HepG2 (cell line): ENCODE measurements at regions of chr2 and their contacts with region 1.

Region 1: DNA sequence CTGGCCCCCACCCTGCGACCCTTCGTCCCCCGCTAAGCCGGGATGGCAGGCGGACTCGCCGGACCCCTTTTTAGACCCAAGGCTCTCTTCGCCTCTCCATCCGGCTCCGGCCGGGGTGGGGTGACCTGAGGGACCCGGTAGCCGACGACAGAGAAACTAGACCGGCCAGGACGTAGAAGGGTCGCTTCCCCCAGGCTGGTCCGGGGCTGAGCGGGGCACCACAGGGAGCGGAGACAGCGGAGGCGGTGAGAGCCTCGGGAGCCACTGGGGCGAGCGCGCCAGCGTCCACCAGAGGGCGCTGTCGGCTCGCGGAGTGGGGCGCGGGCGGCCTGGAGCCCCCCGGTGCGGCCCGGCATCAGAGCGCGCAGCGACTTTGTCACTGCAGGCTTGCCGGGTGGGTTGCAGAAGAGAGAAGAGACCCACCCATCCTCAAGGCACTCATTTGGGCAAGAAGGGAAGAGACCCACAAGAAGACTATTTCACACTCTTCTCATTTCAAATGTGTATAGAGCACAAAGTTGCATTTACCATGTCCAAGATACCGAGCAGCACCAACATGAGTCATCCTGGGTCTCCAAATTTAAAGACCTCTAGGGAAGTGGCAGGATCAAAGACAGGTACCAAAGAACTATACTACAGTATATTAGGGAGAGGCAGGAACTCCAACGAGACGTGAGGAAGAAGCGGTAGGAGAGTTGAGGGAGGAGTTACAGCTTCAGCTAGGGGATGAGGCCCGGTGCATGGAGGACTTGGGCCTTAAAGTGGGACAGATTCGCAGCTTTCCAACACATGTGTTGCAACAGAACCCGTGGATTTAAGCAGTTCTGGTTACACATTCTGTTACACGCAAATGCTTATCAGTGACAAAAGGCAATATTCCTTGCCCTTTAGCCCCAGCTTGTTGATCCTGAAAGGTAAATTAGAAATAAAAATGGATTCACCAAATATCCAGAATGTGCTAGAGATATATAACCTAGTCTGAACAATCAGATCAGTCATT is 7.6 kb upstream of the PRKCE start:
- DNase-seq: peak; percentile 27
- ATAC-seq: peak; percentile 98
- H3K4me3 ChIP-seq: peak overlapping the region; percentile 23 to 63 (median 41); a peak in 5 of 6 replicates
- H3K27ac ChIP-seq: no peak overlapping the region
- H3K4me1 ChIP-seq: peaks cover 22% of the 10 kb centered on the region
- H3K27me3 ChIP-seq: peaks cover 7 to 43% of the 10 kb centered on the region in 2 experiments; a peak in 4 of 5 replicates
- CTCF ChIP-seq: peak; percentile 96
- EP300 ChIP-seq: no peak
- POLR2A ChIP-seq: no peak
- RAD21 ChIP-seq: peak; percentile 100

Region 2: GRCh38 chr2:45729753-45730512 is 86.1 kb after region 1 on chr2:
- CTCF ChIA-PET with region 1: interaction called, 4 read pairs
- POLR2A ChIA-PET with region 1: no interaction called
- in situ Hi-C with region 1: no loop called
- intact Hi-C with region 1: loop called (anchors 2 kb)
- DNase-seq: peak; percentile 57
- ATAC-seq: peak; percentile 95
- H3K4me3 ChIP-seq: no peak overlapping the region
- H3K27ac ChIP-seq: no peak overlapping the region
- H3K4me1 ChIP-seq: no peaks in the 10 kb centered on the region
- H3K27me3 ChIP-seq: no peaks in the 10 kb centered on the region
- CTCF ChIP-seq: peak; percentile 49
- EP300 ChIP-seq: no peak
- POLR2A ChIP-seq: no peak
- RAD21 ChIP-seq: no peak

Region 3: GRCh38 chr2:45741161-45741850 is 97.5 kb after region 1 on chr2:
- CTCF ChIA-PET with region 1: no interaction called
- POLR2A ChIA-PET with region 1: no interaction called
- in situ Hi-C with region 1: no loop called
- intact Hi-C with region 1: no loop called
- DNase-seq: no peak
- ATAC-seq: no peak
- H3K4me3 ChIP-seq: no peak overlapping the region
- H3K27ac ChIP-seq: no peak overlapping the region
- H3K4me1 ChIP-seq: no peaks in the 10 kb centered on the region
- H3K27me3 ChIP-seq: no peaks in the 10 kb centered on the region
- CTCF ChIP-seq: no peak
- EP300 ChIP-seq: no peak
- POLR2A ChIP-seq: no peak
- RAD21 ChIP-seq: no peak

Region 4: GRCh38 chr2:45778720-45779171 is 134.9 kb after region 1 on chr2:
- CTCF ChIA-PET with region 1: interaction called, 24 read pairs
- POLR2A ChIA-PET with region 1: no interaction called
- in situ Hi-C with region 1: loop called (anchors 5 kb)
- intact Hi-C with region 1: loop called (anchors 1 kb)
- DNase-seq: peak; percentile 76
- ATAC-seq: peak; percentile 93
- H3K4me3 ChIP-seq: peak overlapping the region in 2 of 3 experiments; percentile 1 to 4; a peak in 1 of 6 replicates
- H3K27ac ChIP-seq: no peak overlapping the region
- H3K4me1 ChIP-seq: peaks cover 11% of the 10 kb centered on the region
- H3K27me3 ChIP-seq: peaks cover 0 to 6% of the 10 kb centered on the region in 2 experiments; a peak in 1 of 5 replicates
- CTCF ChIP-seq: peak; percentile 79
- EP300 ChIP-seq: no peak
- POLR2A ChIP-seq: 0 out of 4 replicates have a peak, but pooled peaks of 1 of the 2 experiments have one; percentile 27
- RAD21 ChIP-seq: peak; percentile 72

Region 5: GRCh38 chr2:45993476-45993991 is 349.7 kb after region 1 on chr2:
- CTCF ChIA-PET with region 1: no interaction called
- POLR2A ChIA-PET with region 1: no interaction called
- in situ Hi-C with region 1: no loop called
- intact Hi-C with region 1: loop called (anchors 1 kb)
- DNase-seq: peak; percentile 78
- ATAC-seq: peak; percentile 56
- H3K4me3 ChIP-seq: peak overlapping the region in 2 of 3 experiments; percentile 13 to 59; a peak in 3 of 6 replicates
- H3K27ac ChIP-seq: peak overlapping the region; percentile 72
- H3K4me1 ChIP-seq: peaks cover 36% of the 10 kb centered on the region
- H3K27me3 ChIP-seq: no peaks in the 10 kb centered on the region
- CTCF ChIP-seq: peak; percentile 87
- EP300 ChIP-seq: peak in 1 of 2 experiments; percentile 15; a peak in 1 of 4 replicates
- POLR2A ChIP-seq: no peak
- RAD21 ChIP-seq: peak; percentile 76